HAP-1 (cell line): ENCODE measurements at regions of chr2 and their contacts with region 1.

Region 1: DNA sequence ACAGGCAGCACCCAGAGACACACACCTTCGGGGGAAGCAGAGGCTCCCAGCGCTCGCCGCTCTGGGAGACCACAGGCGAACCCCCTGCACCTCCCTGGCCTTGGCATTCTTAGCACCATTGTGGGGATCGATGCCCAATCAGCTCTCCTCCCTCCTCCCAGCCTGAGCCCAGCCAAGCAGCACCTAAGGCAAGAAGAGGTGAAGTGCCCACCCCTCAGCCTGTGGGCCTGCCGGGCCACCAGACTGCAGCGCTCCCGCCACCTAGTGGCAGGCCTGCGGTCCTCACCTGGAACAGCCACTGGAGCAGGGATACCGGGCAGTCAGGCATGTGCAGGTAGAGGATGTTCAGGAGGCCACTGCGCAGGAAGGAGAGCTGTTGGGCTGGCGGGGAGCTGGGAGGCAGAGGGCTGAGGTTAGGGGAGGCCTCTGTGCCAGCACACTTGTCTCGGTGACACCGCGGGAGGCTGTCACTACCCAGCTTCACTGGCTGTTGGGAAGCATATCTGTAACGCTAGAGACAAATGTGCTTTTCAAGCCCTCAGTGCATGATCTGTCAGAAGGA is 35.2 kb downstream of the FAM178B start:
- DNase-seq: peak; percentile 71 to 87
- H3K4me3 ChIP-seq: no peak overlapping the region
- H3K4me1 ChIP-seq: peaks cover 3% of the 10 kb centered on the region; the same call in 1 of the 2 replicates
- H3K27me3 ChIP-seq: no peaks in the 10 kb centered on the region

Region 2: GRCh38 chr2:96856776-96857673 is 94.1 kb before region 1 on chr2:
- in situ Hi-C with region 1: loop called (anchors 5 kb)
- DNase-seq: peak; percentile 22 to 48
- H3K4me3 ChIP-seq: peak overlapping the region; percentile 93
- H3K4me1 ChIP-seq: peaks cover 11% of the 10 kb centered on the region
- H3K27me3 ChIP-seq: no peaks in the 10 kb centered on the region